Transverse colon (tissue), 4 donors: ENCODE measurements at regions of chr17 and their contacts with region 1.

Region 1: GRCh38 chr17:47229535-47230443 is 20.6 kb downstream of the MYL4 start:
- DNase-seq: peak; percentile 88
- H3K4me3 ChIP-seq: peak overlapping the region in 2 of 4 donors; percentile 15 to 22
- H3K27ac ChIP-seq: peak overlapping the region; percentile 9 to 68 (median 40)
- H3K4me1 ChIP-seq: peaks cover 5 to 30% (median 23%) of the 10 kb centered on the region in 4 donors
- H3K27me3 ChIP-seq: no peaks in the 10 kb centered on the region
- CTCF ChIP-seq: peak; percentile 98 to 99 (median 98)
- EP300 ChIP-seq: no peak
- POLR2A ChIP-seq: no peak

Region 2: GRCh38 chr17:47305302-47305923 is 75.6 kb after region 1 on chr17:
- in situ Hi-C with region 1: loop called (anchors 5 to 10 kb)
- intact Hi-C with region 1: no loop called
- DNase-seq: no peak
- H3K4me3 ChIP-seq: no peak overlapping the region
- H3K27ac ChIP-seq: peak overlapping the region; percentile 19 to 51 (median 31)
- H3K4me1 ChIP-seq: peaks cover 0 to 7% (median 5%) of the 10 kb centered on the region in 4 donors
- H3K27me3 ChIP-seq: no peaks in the 10 kb centered on the region
- CTCF ChIP-seq: no peak
- EP300 ChIP-seq: no peak
- POLR2A ChIP-seq: no peak

Region 3: GRCh38 chr17:47315451-47316266 is 85.9 kb after region 1 on chr17:
- in situ Hi-C with region 1: loop called in 3 of 4 experiments (anchors 5 to 10 kb)
- intact Hi-C with region 1: loop called (anchors 2 kb)
- DNase-seq: peak; percentile 33
- H3K4me3 ChIP-seq: no peak overlapping the region
- H3K27ac ChIP-seq: peak overlapping the region; percentile 64 to 84 (median 74)
- H3K4me1 ChIP-seq: peaks cover 0 to 21% (median 12%) of the 10 kb centered on the region in 4 donors
- H3K27me3 ChIP-seq: no peaks in the 10 kb centered on the region
- CTCF ChIP-seq: peak; percentile 71 to 87 (median 79)
- EP300 ChIP-seq: no peak
- POLR2A ChIP-seq: no peak

Region 4: GRCh38 chr17:47615766-47616424 is 386.1 kb after region 1 on chr17:
- in situ Hi-C with region 1: loop called in 1 of 4 experiments (anchors 25 kb)
- intact Hi-C with region 1: no loop called
- DNase-seq: no peak
- H3K4me3 ChIP-seq: no peak overlapping the region
- H3K27ac ChIP-seq: peak overlapping the region in 1 of 4 donors; percentile 15
- H3K4me1 ChIP-seq: no peaks in the 10 kb centered on the region
- H3K27me3 ChIP-seq: no peaks in the 10 kb centered on the region
- CTCF ChIP-seq: peak; percentile 76 to 81 (median 78)
- EP300 ChIP-seq: no peak
- POLR2A ChIP-seq: no peak